Activated T-helper 1 cell treated with anti-CD3 and anti-CD28 coated beads, Interleukin-12 subunit alpha, Interleukin-12 subunit beta, Interleukin-2, Interleukin-4 antibody, amounts not matched to agents 30 ng/mL and 10 ng/mL and 1 ng/mL, durations not matched to agents 14 hours and 24 hours and 36 hours (primary cell): ENCODE measurements at regions of chr17 and their contacts with region 1.

Region 1: DNA sequence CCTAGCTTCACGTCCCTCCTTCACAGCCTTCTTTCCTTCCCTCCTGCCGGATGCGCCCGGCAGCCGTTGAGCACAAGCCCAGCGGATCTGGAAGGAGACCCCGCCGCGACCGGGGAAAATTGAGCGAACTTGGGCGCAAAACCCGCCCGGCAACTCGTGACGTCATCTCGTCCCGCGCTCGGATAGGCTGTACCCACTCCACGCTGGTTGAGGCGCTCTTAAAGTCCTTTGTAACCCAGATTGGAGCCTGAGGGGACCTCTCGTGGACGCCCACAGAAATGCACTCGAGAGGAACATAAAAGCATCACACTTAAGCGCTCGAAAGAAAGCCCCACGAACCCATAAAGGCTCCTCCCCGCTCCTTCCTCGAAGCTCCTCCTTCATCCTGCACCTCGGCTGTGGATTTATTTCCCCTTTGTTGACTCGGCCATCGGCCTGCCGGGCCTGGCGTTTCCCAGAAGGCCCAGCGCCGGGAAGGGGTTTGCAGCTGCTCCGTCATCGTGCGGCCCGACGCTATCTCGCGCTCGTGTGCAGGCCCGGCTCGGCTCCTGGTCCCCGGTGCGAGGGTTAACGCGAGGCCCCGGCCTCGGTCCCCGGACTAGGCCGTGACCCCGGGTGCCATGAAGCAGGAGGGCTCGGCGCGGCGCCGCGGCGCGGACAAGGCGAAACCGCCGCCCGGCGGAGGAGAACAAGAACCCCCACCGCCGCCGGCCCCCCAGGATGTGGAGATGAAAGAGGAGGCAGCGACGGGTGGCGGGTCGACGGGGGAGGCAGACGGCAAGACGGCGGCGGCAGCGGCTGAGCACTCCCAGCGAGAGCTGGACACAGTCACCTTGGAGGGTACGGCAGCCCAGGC is at the start of gene PSMD3:
- DNase-seq: peak; percentile 97
- H3K4me3 Mint-ChIP-seq: peak within 1 kb of the TSS; percentile 96
- H3K27ac Mint-ChIP-seq: peak within 1 kb of the TSS; percentile 92
- H3K4me1 Mint-ChIP-seq: peaks cover 32% of the 10 kb centered on the region
- H3K27me3 Mint-ChIP-seq: peaks cover 6% of the 10 kb centered on the region
- total RNA-seq, gene PSMD3: 191 and 201 TPM in 2 replicates

Region 2: DNA sequence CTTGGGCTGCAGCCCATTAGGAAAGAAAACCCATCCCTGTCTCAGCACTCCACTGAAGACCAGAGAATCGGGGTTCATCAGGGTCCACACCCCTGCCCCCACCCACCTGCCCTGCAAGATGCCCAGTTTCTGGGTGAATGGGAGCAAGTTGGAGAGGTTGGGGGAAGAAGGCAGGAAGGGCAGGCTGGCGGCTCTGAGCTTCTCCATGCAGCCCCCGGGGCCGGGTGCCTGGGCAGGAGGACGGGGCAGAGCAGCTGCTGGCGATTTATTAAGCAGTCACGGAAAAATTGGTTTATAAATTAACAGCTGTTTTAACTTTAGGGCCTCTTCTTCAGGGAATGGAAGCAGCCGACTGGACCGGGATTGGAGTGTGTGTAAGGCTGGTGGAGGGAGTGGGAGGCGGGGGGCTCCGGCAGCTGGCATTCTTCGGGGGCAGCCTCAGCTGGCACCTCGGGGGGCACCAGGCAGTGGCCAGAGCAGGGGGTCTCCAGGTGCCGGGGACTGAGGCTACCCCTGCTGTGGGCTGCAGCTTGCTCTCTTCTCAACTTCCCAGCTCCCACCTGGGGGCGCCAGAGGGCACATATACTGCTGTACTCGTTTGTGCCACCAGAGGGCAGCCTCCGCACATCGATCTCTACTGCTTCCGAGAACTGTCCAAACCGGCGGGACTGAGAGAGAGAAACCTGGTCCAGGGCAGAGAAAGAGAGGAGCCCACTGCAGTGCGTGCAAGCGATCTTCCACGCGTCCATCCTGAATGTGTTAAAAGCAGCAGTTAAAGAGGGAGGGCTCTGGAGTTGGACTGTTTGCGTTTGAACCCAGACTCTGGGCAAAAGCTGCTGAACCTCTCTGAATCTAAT is 358.8 kb before region 1 on chr17:
- intact Hi-C with region 1: loop called (anchors 1 kb)
- DNase-seq: peak; percentile 86
- H3K4me3 Mint-ChIP-seq: peak overlapping the region; percentile 68
- H3K27ac Mint-ChIP-seq: peak overlapping the region; percentile 62
- H3K4me1 Mint-ChIP-seq: peaks cover 27% of the 10 kb centered on the region
- H3K27me3 Mint-ChIP-seq: peaks cover 62% of the 10 kb centered on the region

Region 3: DNA sequence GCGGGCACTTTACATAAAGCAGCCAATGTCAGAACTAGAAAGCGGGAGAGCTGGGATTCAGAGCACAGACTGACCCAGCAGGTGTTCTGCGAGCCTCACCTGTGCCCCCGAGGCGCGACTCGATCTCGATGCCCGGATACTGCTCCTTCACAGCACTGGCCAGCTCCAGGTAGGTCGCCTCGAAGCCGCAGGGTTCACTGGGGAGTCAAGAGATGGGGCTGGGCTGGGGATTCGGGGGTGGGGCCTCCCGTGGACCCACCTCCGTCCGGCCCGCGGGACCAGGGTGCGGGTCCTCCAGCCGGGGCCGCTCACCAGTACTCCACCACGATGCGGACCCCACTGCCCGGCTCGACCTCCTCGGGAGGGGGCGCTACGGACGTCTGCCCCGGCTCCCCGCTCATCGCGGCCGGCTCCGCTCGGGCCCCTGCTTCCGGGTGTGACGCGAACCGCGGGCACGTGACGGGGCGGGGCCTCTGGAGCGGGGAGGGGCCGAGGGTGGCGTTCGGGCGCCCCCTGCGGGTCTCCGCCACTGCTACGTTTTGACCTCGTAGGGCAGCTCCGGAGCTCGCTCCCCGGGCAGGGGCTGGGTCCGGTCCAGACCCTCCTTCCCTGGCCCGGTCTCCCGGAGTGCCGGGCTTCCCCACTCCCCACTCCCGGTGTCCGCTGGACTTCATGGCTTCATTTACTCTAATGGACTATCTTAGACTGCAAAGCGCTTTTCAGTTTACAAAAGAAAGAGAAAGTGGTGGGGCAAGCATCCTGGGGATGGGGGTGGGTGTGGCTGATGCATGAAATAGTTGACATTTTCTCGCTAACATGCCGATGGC is 250.3 kb before region 1 on chr17 and contains the start of gene MIEN1:
- intact Hi-C with region 1: loop called (anchors 1 kb)
- DNase-seq: peak; percentile 90
- H3K4me3 Mint-ChIP-seq: peak within 1 kb of the TSS; percentile 92
- H3K27ac Mint-ChIP-seq: peak within 1 kb of the TSS; percentile 85
- H3K4me1 Mint-ChIP-seq: peaks cover 11% of the 10 kb centered on the region
- H3K27me3 Mint-ChIP-seq: peaks cover 7% of the 10 kb centered on the region
- total RNA-seq, gene MIEN1: 33.3 and 37.1 TPM in 2 replicates

Region 4: GRCh38 chr17:39794249-39794970 is 186.2 kb before region 1 on chr17:
- intact Hi-C with region 1: loop called (anchors 5 kb)
- DNase-seq: no peak
- H3K4me3 Mint-ChIP-seq: peak overlapping the region; percentile 49
- H3K27ac Mint-ChIP-seq: peak overlapping the region; percentile 73
- H3K4me1 Mint-ChIP-seq: peaks cover 64% of the 10 kb centered on the region
- H3K27me3 Mint-ChIP-seq: no peaks in the 10 kb centered on the region

Region 5: DNA sequence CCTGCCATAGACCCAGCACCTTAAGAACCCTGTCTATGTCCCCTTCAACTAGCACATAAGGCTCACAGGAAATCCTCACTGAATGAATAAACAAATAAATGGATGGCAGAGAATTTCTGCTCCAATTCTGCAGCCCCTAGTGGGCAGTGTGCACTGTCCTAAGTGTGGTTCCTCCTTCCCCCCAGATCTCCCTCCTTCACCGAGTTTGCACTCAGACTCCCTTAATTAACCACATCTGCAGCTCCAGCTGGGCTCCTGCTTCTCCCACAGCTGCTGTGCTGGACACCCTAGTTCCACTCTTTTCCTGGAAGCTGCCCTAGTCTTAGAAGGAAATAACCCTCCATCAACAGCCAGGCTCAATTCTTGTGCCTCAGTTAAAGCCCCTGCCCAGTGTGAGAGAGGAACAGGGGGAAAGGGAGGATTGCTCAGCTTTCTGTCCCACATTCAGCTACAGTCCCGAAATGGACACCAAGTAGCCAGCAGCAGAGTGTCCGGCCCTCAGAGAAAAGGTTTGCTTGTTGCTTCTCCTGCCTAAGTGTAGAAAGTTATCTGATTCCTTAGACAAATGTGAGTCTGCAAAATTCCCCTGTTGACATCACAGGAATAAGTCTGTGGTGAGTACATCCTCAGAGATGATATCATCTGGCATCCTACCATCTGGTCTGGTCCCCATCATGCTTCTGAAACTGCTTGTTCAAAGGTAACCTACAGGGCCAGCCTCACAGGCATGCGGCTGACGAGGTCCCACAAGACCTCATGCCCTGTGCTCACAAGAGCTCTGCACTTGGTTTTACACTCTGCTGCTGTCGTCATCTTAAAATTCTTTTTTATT is 40.8 kb before region 1 on chr17:
- intact Hi-C with region 1: loop called (anchors 1 kb)
- DNase-seq: peak; percentile 71
- H3K4me3 Mint-ChIP-seq: peak overlapping the region; percentile 31
- H3K27ac Mint-ChIP-seq: peak overlapping the region; percentile 87
- H3K4me1 Mint-ChIP-seq: peaks cover 25% of the 10 kb centered on the region
- H3K27me3 Mint-ChIP-seq: peaks cover 4% of the 10 kb centered on the region

Region 6: DNA sequence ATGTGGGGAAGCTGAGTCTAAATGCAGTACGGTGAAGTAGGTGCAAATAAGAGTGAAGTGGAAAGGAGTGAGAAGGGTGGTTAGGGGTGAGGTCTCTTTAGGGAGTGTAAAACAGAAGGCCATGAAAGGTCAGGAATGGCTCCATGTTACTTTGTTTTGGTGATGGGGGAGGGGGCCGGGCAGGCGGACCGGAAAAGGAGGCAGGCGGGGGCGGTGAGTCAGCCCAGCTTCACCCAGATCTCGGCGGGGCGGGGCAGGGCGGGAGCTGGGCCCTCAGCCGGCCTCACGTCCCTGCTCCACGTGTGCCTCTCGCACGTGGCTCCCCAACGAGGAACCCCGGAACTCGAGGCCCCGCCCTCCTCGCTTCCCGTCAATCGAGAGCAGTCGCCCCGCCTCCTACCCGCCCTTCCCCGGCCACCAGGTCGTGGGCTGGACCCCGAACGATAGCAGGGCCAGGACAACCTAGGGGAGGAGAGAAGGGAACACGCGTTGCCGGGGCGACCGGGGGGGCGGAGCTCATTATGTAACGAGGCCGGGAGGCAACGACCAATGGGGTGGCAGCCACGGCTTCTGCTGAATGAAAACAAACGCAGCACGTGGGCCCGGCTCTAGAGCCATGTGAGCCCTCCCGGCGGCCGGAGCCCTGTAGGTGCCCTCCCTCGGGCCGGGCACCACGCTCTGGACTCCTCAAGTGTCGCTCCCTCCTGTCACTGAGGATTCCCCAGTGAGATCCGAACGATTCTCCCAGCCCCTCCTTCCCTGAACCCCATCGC is 118.5 kb after region 1 on chr17:
- intact Hi-C with region 1: loop called (anchors 1 kb)
- DNase-seq: peak; percentile 86
- H3K4me3 Mint-ChIP-seq: peak overlapping the region; percentile 92
- H3K27ac Mint-ChIP-seq: peak overlapping the region; percentile 85
- H3K4me1 Mint-ChIP-seq: peaks cover 81% of the 10 kb centered on the region
- H3K27me3 Mint-ChIP-seq: peaks cover 11% of the 10 kb centered on the region

Region 7: DNA sequence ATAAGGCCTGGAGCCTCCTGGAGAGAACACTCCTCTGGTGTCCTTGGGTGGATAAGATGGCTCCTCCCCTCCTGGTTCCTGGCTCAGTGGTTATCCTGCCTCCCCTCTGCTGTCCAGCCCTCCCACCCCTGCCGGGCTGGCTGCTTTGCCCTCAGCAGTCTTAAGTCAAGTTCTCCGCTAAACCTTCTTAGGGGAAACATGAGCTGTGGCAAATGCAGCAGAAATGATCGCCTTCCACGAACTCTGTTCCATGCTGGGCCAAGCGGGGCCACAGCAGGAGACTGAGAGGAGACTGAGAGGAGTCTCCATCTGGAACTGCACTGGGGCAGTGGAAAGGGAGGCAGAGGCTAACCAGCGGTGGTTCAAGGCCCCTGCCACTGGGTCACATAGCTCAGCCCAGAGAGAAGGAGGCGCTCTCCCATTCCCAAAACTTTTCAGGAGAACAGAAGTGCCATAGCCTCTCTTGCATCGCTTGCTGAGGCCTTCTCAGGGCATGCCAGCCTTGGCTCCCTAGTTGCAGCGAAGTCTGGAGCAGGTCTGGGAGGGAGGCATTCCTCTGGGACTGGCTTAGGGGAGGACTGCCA is 493.9 kb after region 1 on chr17:
- intact Hi-C with region 1: no loop called
- DNase-seq: no peak
- H3K4me3 Mint-ChIP-seq: no peak overlapping the region
- H3K27ac Mint-ChIP-seq: no peak overlapping the region
- H3K4me1 Mint-ChIP-seq: peaks cover 25% of the 10 kb centered on the region
- H3K27me3 Mint-ChIP-seq: peaks cover 3% of the 10 kb centered on the region